RWPE1 (cell line): ENCODE measurements at regions of chr15 and their contacts with region 1.

Region 1: DNA sequence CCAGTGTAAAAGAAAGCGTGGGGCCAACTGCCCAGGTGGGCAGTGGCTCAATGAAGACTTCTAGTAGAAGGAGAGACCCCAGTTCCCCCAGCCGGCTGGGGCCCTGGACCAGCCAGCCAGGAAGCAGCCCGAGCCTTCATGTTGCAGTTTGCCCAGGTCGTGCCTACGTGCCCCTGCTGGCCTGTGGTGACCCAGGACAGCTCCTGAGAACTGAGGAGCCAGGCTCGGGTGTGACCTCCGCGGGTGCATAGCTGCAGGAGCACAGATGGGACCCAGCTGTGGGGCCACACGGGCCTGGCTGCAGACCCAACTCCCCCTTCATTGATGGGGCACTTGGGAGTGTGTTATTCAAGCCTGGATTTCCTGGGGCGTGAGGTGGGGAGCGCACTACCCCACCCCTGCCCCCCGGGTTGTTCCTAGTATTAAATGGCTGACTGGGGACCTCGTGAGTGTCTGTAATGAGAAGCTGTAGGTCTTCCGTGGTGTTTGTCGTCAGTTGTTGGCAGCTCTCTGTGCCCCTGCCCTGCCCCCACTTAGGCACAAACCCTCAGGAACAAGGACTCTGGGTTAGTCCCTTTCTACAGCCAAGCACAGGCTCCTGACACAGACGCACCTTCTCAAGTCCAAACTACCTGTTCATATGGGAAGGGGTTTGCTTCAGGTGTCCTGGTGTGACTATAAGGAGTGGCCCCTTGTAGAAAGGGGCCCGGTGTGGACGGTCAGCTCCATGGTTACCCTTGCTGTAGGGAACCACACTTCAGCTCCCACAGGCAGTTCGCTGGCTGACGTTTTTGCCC is 39.1 kb downstream of the IDH2 start:
- DNase-seq: no peak
- H3K27ac ChIP-seq: peak overlapping the region; percentile 36
- CTCF ChIP-seq: no peak

Region 2: GRCh38 chr15:90086868-90087268 is 23.7 kb after region 1 on chr15:
- CTCF ChIA-PET with region 1: no interaction called
- POLR2A ChIA-PET with region 1: interaction called, 13 read pairs
- DNase-seq: peak; percentile 61
- H3K27ac ChIP-seq: no peak overlapping the region
- CTCF ChIP-seq: peak; percentile 76